ENCODE measurements at regions of chr17 and their contacts with region 1.

Region 1: DNA sequence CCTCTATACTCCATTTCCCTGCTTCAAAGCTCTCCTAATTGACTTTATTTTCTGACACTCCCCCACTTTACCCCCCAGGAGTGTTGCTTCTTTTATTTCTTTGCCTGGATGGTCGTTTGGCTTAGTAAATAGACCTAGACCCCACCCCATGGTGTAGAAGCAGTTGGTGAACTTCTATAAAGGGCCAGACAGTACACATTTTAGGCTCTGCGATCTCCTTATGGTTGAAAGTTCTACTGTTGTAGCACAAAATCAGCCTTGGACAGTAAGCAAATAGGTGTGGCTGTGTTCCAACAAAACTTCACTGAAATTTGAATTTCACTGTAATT is 31.9 kb downstream of the ZNF287 start:
- DNase-seq: no peak
- ATAC-seq: no peak
- H3K4me3 ChIP-seq: no peak overlapping the region
- H3K4me3 Mint-ChIP-seq: peak overlapping the region; percentile 99
- H3K27ac ChIP-seq: no peak overlapping the region
- H3K27ac Mint-ChIP-seq: peak overlapping the region; percentile 96 to 97
- H3K4me1 ChIP-seq: peaks cover 16% of the 10 kb centered on the region
- H3K4me1 Mint-ChIP-seq: peaks cover 24 to 27% of the 10 kb centered on the region in 2 donors
- H3K27me3 ChIP-seq: no peaks in the 10 kb centered on the region
- H3K27me3 Mint-ChIP-seq: peaks cover 0 to 3% of the 10 kb centered on the region in 2 donors
- CTCF ChIP-seq: no peak

Region 2: GRCh38 chr17:16380640-16381495 is 156.2 kb before region 1 on chr17 and contains the start of gene UBB:
- intact Hi-C with region 1: loop called (anchors 5 kb)
- DNase-seq: peak; percentile 91 to 98
- ATAC-seq: peak; percentile 86 to 95 (median 87)
- H3K4me3 ChIP-seq: peak within 1 kb of the TSS; percentile 58
- H3K4me3 Mint-ChIP-seq: peak within 1 kb of the TSS; percentile 99
- H3K27ac ChIP-seq: peak within 1 kb of the TSS; percentile 90
- H3K27ac Mint-ChIP-seq: peak within 1 kb of the TSS; percentile 99 to 100
- H3K4me1 ChIP-seq: peaks cover 22% of the 10 kb centered on the region
- H3K4me1 Mint-ChIP-seq: peaks cover 40 to 45% of the 10 kb centered on the region in 2 donors
- H3K27me3 ChIP-seq: no peaks in the 10 kb centered on the region
- H3K27me3 Mint-ChIP-seq: no peaks in the 10 kb centered on the region
- CTCF ChIP-seq: no peak
- total RNA-seq, gene UBB: 1,492 to 1,665 (median 1,530) TPM

Region 3: GRCh38 chr17:16589097-16589969 is 52.2 kb after region 1 on chr17:
- intact Hi-C with region 1: loop called (anchors 1 kb)
- DNase-seq: peak; percentile 91 to 96
- ATAC-seq: peak; percentile 98
- H3K4me3 ChIP-seq: peak overlapping the region; percentile 47
- H3K4me3 Mint-ChIP-seq: peak overlapping the region; percentile 79
- H3K27ac ChIP-seq: no peak overlapping the region
- H3K27ac Mint-ChIP-seq: no peak overlapping the region
- H3K4me1 ChIP-seq: peaks cover 14% of the 10 kb centered on the region
- H3K4me1 Mint-ChIP-seq: peaks cover 3 to 11% of the 10 kb centered on the region in 2 donors
- H3K27me3 ChIP-seq: no peaks in the 10 kb centered on the region
- H3K27me3 Mint-ChIP-seq: peaks cover 24 to 75% of the 10 kb centered on the region in 2 donors
- CTCF ChIP-seq: peak; percentile 97

Region 4: GRCh38 chr17:16599537-16599936 is 62.4 kb after region 1 on chr17:
- intact Hi-C with region 1: no loop called
- DNase-seq: no peak
- ATAC-seq: no peak
- H3K4me3 ChIP-seq: no peak overlapping the region
- H3K4me3 Mint-ChIP-seq: no peak overlapping the region
- H3K27ac ChIP-seq: no peak overlapping the region
- H3K27ac Mint-ChIP-seq: no peak overlapping the region
- H3K4me1 ChIP-seq: no peaks in the 10 kb centered on the region
- H3K4me1 Mint-ChIP-seq: no peaks in the 10 kb centered on the region
- H3K27me3 ChIP-seq: no peaks in the 10 kb centered on the region
- H3K27me3 Mint-ChIP-seq: peaks cover 3 to 19% of the 10 kb centered on the region in 2 donors
- CTCF ChIP-seq: no peak

Region 5: DNA sequence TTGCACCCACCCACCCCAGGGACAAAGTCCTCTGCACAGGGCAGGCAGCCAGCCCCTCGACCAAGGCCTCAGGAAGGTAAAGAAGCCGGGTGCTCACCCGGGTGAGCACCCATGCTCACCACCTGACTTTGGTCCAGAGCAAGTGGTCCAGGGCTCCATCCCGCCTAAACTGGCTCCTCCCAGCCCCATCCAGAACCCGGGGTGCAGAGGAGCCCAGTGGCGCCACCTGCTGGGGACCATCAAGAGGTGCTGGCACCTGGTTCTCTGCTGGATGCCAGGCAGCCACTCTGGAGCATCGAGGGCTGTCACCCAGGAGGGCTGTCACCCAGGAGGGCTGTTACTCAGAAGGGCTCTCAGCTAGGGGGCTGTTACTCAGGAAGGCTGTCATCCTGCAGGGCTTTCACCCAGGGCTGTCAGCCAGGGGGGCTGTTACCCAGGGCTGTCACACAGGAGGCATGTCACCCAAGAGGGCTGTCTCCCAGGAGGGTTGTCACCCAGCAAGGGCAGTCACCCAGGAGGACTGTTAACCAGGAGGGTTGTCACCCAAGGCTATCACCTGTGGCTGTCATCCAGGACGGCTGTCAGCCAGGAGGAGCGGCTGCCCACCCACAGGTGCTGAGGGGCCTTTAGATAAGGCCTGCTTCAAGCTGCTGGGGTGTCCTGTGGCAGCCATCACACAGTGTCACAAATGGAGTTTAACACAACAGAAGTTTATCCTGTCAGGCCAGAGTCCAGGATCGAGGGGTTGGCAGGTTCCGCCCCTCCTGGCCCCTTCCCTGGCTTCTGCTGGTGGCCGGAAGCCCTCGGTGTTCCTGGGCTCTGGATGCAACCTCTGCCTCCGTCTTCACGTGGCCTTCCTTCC is 336.3 kb after region 1 on chr17:
- intact Hi-C with region 1: loop called (anchors 2 kb)
- DNase-seq: peak in 1 of 2 donors; percentile 53
- ATAC-seq: peak in 2 of 3 donors; percentile 33 to 69
- H3K4me3 ChIP-seq: no peak overlapping the region
- H3K4me3 Mint-ChIP-seq: no peak overlapping the region
- H3K27ac ChIP-seq: no peak overlapping the region
- H3K27ac Mint-ChIP-seq: no peak overlapping the region
- H3K4me1 ChIP-seq: no peaks in the 10 kb centered on the region
- H3K4me1 Mint-ChIP-seq: no peaks in the 10 kb centered on the region
- H3K27me3 ChIP-seq: no peaks in the 10 kb centered on the region
- H3K27me3 Mint-ChIP-seq: peaks cover 0 to 5% of the 10 kb centered on the region in 2 donors
- CTCF ChIP-seq: peak; percentile 31

Region 6: GRCh38 chr17:16987830-16988601 is 450.9 kb after region 1 on chr17:
- intact Hi-C with region 1: loop called (anchors 10 kb)
- DNase-seq: peak; percentile 57 to 70
- ATAC-seq: peak; percentile 86 to 90 (median 88)
- H3K4me3 ChIP-seq: no peak overlapping the region
- H3K4me3 Mint-ChIP-seq: peak overlapping the region; percentile 83
- H3K27ac ChIP-seq: peak overlapping the region; percentile 87
- H3K27ac Mint-ChIP-seq: peak overlapping the region; percentile 86 to 87
- H3K4me1 ChIP-seq: peaks cover 50% of the 10 kb centered on the region
- H3K4me1 Mint-ChIP-seq: peaks cover 20 to 49% of the 10 kb centered on the region in 2 donors
- H3K27me3 ChIP-seq: no peaks in the 10 kb centered on the region
- H3K27me3 Mint-ChIP-seq: no peaks in the 10 kb centered on the region
- CTCF ChIP-seq: no peak